ENCODE measurements at regions of chr3 and their contacts with region 1.

Region 1: GRCh38 chr3:42080452-42080891 is 10.7 kb upstream of the TRAK1 start:
- DNase-seq: peak; percentile 40
- H3K4me3 Mint-ChIP-seq: no peak overlapping the region
- H3K27ac Mint-ChIP-seq: peak overlapping the region; percentile 41
- H3K4me1 Mint-ChIP-seq: peaks cover 44% of the 10 kb centered on the region
- H3K27me3 Mint-ChIP-seq: no peaks in the 10 kb centered on the region

Region 2: GRCh38 chr3:41955192-41955591 is 125.3 kb before region 1 on chr3:
- CTCF ChIA-PET with region 1: no interaction called
- intact Hi-C with region 1: no loop called
- DNase-seq: no peak
- H3K4me3 Mint-ChIP-seq: no peak overlapping the region
- H3K27ac Mint-ChIP-seq: no peak overlapping the region
- H3K4me1 Mint-ChIP-seq: peaks cover 1% of the 10 kb centered on the region
- H3K27me3 Mint-ChIP-seq: no peaks in the 10 kb centered on the region

Region 3: DNA sequence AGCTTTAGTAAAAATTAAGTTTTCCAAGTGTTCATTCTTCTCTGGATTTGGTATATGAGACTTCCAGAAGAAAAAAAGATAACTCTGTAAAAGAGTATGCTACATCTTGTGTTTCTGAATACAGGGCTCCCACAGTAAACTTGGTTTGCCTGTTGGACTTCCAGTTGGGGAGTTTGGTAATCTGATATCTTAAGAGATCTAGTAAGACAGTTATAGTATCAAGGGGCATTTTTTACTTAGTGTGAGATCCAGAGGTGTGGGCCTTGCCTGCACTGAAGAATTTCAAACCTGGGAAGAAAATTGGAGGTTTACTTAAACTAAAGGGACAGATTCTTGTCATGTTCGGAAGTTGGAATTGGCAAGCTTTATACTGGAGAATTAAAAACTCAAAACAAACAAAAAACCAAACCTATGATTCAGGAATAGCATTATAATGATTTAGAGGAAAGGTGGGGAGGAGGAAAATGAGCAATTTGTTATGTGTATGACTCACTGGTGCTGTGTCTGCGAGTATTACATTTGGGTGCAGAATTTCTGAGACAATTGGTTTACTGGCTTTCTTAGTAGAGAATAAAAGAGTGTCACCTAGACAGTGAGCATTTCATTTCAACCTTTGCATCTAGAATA is 59.7 kb before region 1 on chr3:
- CTCF ChIA-PET with region 1: no interaction called
- intact Hi-C with region 1: loop called (anchors 2 kb)
- DNase-seq: peak; percentile 13
- H3K4me3 Mint-ChIP-seq: no peak overlapping the region
- H3K27ac Mint-ChIP-seq: peak overlapping the region; percentile 37
- H3K4me1 Mint-ChIP-seq: peaks cover 81% of the 10 kb centered on the region
- H3K27me3 Mint-ChIP-seq: no peaks in the 10 kb centered on the region

Region 4: GRCh38 chr3:42090973-42091731 is 10.7 kb after region 1 on chr3 and contains the start of gene TRAK1:
- CTCF ChIA-PET with region 1: no interaction called
- intact Hi-C with region 1: loop called (anchors 1 kb)
- DNase-seq: no peak
- H3K4me3 Mint-ChIP-seq: no peak within 1 kb of the TSS
- H3K27ac Mint-ChIP-seq: no peak within 1 kb of the TSS
- H3K4me1 Mint-ChIP-seq: peaks cover 51% of the 10 kb centered on the region
- H3K27me3 Mint-ChIP-seq: no peaks in the 10 kb centered on the region
- total RNA-seq, gene TRAK1: 18.3 to 19.1 TPM

Region 5: GRCh38 chr3:42387802-42388651 is 307.6 kb after region 1 on chr3:
- CTCF ChIA-PET with region 1: no interaction called
- intact Hi-C with region 1: loop called (anchors 5 kb)
- DNase-seq: peak; percentile 75
- H3K4me3 Mint-ChIP-seq: peak overlapping the region; percentile 44
- H3K27ac Mint-ChIP-seq: peak overlapping the region; percentile 96
- H3K4me1 Mint-ChIP-seq: peaks cover 25% of the 10 kb centered on the region
- H3K27me3 Mint-ChIP-seq: no peaks in the 10 kb centered on the region